Spleen (tissue), 13 donors: ENCODE measurements at regions of chr3 and their contacts with region 1.

Region 1: GRCh38 chr3:10224784-10225665 is 23.2 kb upstream of the TATDN2 start:
- DNase-seq: peak; percentile 83
- H3K4me3 ChIP-seq: peak overlapping the region in 1 of 8 donors; percentile 22
- H3K27ac ChIP-seq: peak overlapping the region; percentile 8 to 80 (median 57)
- H3K4me1 ChIP-seq: peaks cover 34 to 99% (median 69%) of the 10 kb centered on the region in 6 donors
- H3K27me3 ChIP-seq: no peaks in the 10 kb centered on the region
- CTCF ChIP-seq: peak; percentile 64 to 97 (median 84)
- POLR2A ChIP-seq: no peak

Region 2: GRCh38 chr3:9769426-9770275 is 455.4 kb before region 1 on chr3 and contains the start of gene CAMK1:
- intact Hi-C with region 1: no loop called
- DNase-seq: peak; percentile 92
- H3K4me3 ChIP-seq: peak within 1 kb of the TSS; percentile 35 to 71 (median 49)
- H3K27ac ChIP-seq: peak within 1 kb of the TSS; percentile 53 to 85 (median 78)
- H3K4me1 ChIP-seq: peaks cover 6 to 56% (median 44%) of the 10 kb centered on the region in 6 donors
- H3K27me3 ChIP-seq: peaks cover 0 to 11% (median 0%) of the 10 kb centered on the region in 7 donors
- CTCF ChIP-seq: no peak
- POLR2A ChIP-seq: no peak
- total RNA-seq, gene CAMK1: 10.1 to 30.5 (median 22.6) TPM

Region 3: GRCh38 chr3:10026084-10026890 is 198.7 kb before region 1 on chr3 and contains the start of gene FANCD2:
- intact Hi-C with region 1: loop called (anchors 10 kb)
- DNase-seq: peak; percentile 96
- H3K4me3 ChIP-seq: peak within 1 kb of the TSS; percentile 85 to 96 (median 93)
- H3K27ac ChIP-seq: peak within 1 kb of the TSS; percentile 69 to 93 (median 86)
- H3K4me1 ChIP-seq: peaks cover 21 to 43% (median 31%) of the 10 kb centered on the region in 6 donors
- H3K27me3 ChIP-seq: no peaks in the 10 kb centered on the region
- CTCF ChIP-seq: peak in 4 of 11 experiments; percentile 28 to 42 (median 32)
- POLR2A ChIP-seq: peak; percentile 18 to 60 (median 50)
- total RNA-seq, gene FANCD2: 9.3 to 19.5 (median 13.6) TPM

Region 4: GRCh38 chr3:10099041-10099440 is 126.0 kb before region 1 on chr3:
- intact Hi-C with region 1: no loop called
- DNase-seq: no peak
- H3K4me3 ChIP-seq: no peak overlapping the region
- H3K27ac ChIP-seq: no peak overlapping the region
- H3K4me1 ChIP-seq: no peaks in the 10 kb centered on the region
- H3K27me3 ChIP-seq: no peaks in the 10 kb centered on the region
- CTCF ChIP-seq: no peak
- POLR2A ChIP-seq: no peak

Region 5: DNA sequence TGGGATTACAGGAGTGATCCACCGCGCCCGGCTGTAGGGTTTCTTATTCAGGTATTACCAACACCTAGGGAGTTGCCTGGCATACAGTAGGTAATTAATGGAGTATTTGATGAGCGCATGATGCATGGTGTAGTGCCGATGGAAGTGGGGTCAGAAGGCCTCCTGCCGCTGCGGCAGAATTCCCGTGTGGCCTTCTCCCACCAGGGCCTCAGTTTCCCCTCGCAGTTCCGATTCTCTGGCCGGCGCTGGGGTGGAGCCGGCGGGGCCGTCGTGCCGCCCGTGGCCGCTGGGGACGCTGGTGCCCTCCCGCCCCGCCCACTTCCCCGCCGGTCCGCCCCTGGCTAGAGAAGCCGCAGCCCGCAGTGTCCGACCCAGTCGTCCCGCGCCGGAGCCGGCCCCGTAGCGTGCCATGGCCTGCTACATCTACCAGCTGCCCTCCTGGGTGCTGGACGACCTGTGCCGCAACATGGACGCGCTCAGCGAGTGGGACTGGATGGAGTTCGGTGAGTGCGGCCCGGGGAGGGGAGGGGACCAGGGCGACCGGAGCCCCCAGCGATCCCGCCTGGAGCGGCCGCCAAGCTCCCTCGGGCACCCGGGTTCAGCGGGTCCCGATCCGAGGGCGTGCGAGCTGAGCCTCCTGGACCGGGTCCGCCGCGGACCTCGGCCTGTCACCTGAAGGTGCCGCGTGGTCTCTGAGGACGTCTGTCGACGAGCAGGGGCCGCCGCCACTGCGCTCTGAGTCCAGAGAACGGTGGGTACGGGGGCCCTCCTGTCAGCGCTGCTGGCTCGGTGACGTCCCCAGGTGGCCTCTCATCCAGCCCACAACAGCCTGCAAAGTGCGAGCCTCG is 60.3 kb before region 1 on chr3 and contains the start of gene IRAK2:
- intact Hi-C with region 1: loop called (anchors 10 kb)
- DNase-seq: peak; percentile 95
- H3K4me3 ChIP-seq: peak within 1 kb of the TSS; percentile 81 to 95 (median 83)
- H3K27ac ChIP-seq: peak within 1 kb of the TSS; percentile 63 to 92 (median 84)
- H3K4me1 ChIP-seq: peaks cover 3 to 75% (median 34%) of the 10 kb centered on the region in 6 donors
- H3K27me3 ChIP-seq: no peaks in the 10 kb centered on the region
- CTCF ChIP-seq: peak; percentile 58 to 98 (median 95)
- POLR2A ChIP-seq: no peak
- total RNA-seq, gene IRAK2: 4.8 to 11.8 (median 9.4) TPM